ENCODE measurements at regions of chr9 and their contacts with region 1.

Region 1: DNA sequence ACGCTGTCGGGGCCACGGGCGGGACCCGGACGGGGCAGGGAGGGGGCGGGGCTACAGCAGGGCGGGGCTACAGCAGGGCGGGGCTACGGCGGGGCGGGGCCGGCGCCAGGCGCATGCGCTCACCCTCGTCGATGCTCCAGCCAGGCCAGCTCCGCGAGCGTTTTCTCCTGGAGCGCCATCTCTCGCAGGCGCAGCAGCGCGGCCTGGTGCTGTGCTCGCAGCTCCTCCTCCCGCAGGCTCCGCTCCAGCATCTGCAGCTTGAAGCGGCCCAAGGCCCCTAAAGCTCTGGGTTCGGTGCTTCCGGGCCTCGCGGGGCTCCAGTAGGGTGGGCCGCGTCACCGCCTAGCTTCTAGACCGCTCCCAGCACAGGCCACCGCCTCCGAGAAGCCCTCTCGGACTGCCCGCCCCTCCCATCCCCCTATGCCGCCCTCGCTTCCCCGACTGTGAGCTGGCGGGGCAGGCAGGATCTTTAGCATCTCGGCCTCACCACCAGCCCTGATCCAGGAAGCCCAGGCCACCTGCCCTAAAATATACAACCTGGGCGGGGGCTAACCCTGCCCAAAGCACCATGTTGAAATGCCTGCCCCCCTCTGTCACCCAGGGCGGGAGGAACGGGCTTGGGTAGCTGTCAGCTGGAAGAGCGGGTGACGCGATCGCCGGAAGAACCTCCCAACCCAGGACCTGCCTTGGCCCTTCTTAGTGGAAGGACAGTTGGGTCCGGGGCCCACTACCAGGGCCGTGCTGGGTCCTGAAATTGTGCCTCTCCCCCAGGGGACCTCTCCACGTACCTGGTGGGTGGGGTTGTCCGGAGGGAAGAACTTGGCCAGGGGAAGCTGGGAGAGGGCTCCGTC is 21.9 kb upstream of the QSOX2 start:
- DNase-seq: peak; percentile 73
- H3K4me3 ChIP-seq: peak overlapping the region in 2 of 3 experiments; percentile 21 to 44
- H3K27ac ChIP-seq: no peak overlapping the region
- H3K4me1 ChIP-seq: no peaks in the 10 kb centered on the region
- H3K27me3 ChIP-seq: peaks cover 0 to 4% of the 10 kb centered on the region in 2 experiments
- CTCF ChIP-seq: peak in 1 of 2 donors; percentile 32
- POLR2A ChIP-seq: peak; percentile 72

Region 2: DNA sequence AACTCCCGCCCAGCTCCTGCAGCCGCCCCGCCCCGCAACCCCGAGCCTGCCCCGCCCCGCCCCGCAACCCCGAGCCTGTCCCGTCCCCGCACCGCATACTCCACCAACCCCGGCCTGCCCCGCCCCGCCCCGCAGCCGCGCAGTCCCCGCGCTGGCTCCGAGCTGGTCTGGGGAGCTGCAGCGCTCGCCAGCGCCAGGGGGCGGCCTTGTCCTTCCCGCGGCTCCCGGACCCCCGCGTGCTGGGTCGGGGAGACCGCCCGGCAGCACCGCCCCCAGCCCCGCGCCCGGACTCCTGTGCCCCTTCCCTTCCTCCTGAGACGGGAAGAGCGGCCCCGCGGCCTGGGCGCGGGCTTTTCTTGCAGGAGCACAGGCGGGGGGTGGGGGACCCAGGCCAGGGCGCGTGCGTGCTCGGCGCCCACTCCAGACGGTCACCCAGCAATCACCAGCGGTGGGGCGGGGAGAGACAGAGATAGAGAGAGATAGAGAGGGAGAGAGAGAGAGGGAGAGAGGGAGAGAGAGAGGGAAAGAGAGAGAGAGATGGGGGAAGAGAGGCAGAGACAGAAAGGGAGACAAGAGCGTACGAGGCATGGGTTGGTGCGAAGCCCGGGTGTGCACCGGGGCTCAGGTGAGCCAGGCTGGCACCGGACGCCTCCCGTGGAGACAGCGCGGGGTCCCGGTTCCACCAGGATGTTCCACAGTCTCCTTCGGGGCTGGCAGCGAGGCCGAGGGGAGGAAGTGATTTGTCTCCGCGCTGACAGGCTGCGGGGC is 134.1 kb before region 1 on chr9:
- CTCF ChIA-PET with region 1: interaction called, 14 read pairs
- POLR2A ChIA-PET with region 1: no interaction called
- dilution Hi-C with region 1: no loop called
- intact Hi-C with region 1: no loop called
- DNase-seq: no peak
- H3K4me3 ChIP-seq: peak overlapping the region in 1 of 3 experiments; percentile 35
- H3K27ac ChIP-seq: no peak overlapping the region
- H3K4me1 ChIP-seq: peaks cover 4% of the 10 kb centered on the region
- H3K27me3 ChIP-seq: peaks cover 26 to 30% of the 10 kb centered on the region in 2 experiments
- CTCF ChIP-seq: peak; percentile 39 to 68
- POLR2A ChIP-seq: no peak

Region 3: DNA sequence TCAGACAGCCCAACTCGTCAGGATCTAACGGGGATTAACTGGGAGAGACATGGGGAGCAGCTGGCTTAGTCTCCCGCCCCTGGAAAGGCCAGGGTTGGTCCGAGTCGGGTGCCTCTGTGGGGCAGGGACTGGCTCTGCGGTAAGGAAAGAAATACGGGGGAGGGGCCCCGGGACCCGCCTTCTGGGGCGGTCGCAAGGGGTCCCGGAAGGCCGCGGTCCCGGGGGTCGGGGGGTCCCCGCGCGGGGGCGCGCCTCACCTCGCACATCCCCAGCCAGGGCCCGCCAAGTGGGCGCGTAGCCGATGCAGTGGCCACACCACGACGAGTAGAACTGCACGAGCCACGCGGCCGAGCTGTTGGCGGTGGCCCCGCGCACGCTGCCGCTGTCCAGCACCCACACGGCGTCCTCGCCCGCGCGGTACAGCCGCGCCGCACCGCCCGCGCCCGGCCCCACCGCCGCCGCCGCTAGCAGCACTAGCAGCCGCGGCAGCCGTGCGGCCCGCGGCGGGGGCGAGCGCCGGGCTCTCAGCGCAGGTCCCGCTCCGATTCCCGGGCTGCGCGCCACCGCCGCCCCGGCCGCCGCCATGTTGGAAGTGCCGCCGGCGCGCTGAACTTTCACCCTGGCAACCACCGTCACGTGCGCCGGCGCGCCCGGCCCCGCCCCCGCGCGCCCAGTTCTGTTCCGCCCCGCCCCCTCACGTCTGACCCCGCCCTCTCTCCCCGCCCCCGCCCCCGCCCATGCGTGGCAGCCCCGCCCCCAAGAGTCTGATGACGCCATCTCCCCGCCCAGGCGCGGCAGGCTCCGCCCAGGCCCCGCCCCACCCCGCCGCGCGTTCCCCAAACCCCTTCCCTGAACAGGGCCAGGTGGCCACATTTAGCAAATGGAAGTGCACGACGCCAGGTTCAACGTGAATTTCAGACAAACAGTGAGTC is 22.0 kb before region 1 on chr9 and contains the start of gene QSOX2:
- CTCF ChIA-PET with region 1: interaction called, 4 read pairs
- POLR2A ChIA-PET with region 1: no interaction called
- dilution Hi-C with region 1: no loop called
- intact Hi-C with region 1: loop called (anchors 1 kb)
- DNase-seq: peak; percentile 42
- H3K4me3 ChIP-seq: peak within 1 kb of the TSS; percentile 71 to 82 (median 72)
- H3K27ac ChIP-seq: no peak within 1 kb of the TSS
- H3K4me1 ChIP-seq: peaks cover 9% of the 10 kb centered on the region
- H3K27me3 ChIP-seq: peaks cover 0 to 6% of the 10 kb centered on the region in 2 experiments
- CTCF ChIP-seq: no peak
- POLR2A ChIP-seq: no peak
- total RNA-seq, gene QSOX2: 20.9 and 23.4 TPM in 2 replicates

Region 4: GRCh38 chr9:136324501-136325300 is 57.2 kb after region 1 on chr9:
- CTCF ChIA-PET with region 1: no interaction called
- POLR2A ChIA-PET with region 1: no interaction called
- dilution Hi-C with region 1: no loop called
- intact Hi-C with region 1: no loop called
- DNase-seq: no peak
- H3K4me3 ChIP-seq: no peak overlapping the region
- H3K27ac ChIP-seq: no peak overlapping the region
- H3K4me1 ChIP-seq: peaks cover 20% of the 10 kb centered on the region
- H3K27me3 ChIP-seq: no peaks in the 10 kb centered on the region
- CTCF ChIP-seq: peak in 1 of 2 donors; percentile 4
- POLR2A ChIP-seq: no peak

Region 5: DNA sequence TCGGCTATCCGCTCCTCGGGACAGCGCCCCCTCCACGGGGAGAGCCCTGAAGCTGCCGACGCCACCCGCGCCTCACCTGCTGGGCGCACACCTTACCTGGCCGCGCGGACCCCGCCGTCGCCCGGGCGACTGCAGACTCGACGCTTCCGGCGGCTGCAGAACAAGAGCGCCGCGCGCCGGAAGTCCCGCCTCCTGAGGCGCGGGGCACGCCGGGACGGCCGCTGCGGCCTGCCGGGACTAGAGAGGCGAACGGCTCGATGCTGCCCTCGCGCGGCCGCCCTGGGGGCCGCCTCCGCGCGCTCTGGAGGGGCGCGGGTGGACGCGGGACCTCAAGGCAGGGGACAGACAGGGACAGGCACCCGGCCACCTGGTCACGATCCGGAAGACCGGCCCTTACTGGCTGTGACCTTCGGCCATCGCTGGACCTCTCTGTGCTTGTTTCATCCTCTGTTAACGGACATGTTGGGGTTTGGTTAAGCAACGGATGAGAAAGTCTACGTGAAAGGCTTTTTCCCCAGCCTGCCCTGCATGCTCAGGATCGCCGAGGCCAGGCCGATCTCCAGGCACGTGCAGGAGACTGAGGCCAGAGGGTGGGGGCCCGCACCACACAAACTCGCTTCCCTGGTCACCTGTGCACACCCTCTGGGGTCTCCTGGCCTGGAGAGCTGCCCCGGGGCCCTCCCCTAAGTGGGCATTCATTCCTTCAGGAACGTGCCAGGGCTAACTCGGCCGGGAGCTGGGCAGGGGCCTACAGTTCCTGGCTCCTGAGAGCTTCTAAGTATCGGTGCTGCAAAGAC is 132.8 kb after region 1 on chr9 and contains the start of gene SNAPC4:
- CTCF ChIA-PET with region 1: no interaction called
- POLR2A ChIA-PET with region 1: no interaction called
- dilution Hi-C with region 1: no loop called
- intact Hi-C with region 1: no loop called
- DNase-seq: peak; percentile 82
- H3K4me3 ChIP-seq: peak within 1 kb of the TSS; percentile 55 to 96 (median 62)
- H3K27ac ChIP-seq: peak within 1 kb of the TSS; percentile 27
- H3K4me1 ChIP-seq: peaks cover 10% of the 10 kb centered on the region
- H3K27me3 ChIP-seq: no peaks in the 10 kb centered on the region
- CTCF ChIP-seq: peak; percentile 88 to 97
- POLR2A ChIP-seq: peak; percentile 90
- total RNA-seq, gene SNAPC4: 14.7 and 17.5 TPM in 2 replicates